IMR-90 (cell line): ENCODE measurements at regions of chr4 and their contacts with region 1.

Region 1: DNA sequence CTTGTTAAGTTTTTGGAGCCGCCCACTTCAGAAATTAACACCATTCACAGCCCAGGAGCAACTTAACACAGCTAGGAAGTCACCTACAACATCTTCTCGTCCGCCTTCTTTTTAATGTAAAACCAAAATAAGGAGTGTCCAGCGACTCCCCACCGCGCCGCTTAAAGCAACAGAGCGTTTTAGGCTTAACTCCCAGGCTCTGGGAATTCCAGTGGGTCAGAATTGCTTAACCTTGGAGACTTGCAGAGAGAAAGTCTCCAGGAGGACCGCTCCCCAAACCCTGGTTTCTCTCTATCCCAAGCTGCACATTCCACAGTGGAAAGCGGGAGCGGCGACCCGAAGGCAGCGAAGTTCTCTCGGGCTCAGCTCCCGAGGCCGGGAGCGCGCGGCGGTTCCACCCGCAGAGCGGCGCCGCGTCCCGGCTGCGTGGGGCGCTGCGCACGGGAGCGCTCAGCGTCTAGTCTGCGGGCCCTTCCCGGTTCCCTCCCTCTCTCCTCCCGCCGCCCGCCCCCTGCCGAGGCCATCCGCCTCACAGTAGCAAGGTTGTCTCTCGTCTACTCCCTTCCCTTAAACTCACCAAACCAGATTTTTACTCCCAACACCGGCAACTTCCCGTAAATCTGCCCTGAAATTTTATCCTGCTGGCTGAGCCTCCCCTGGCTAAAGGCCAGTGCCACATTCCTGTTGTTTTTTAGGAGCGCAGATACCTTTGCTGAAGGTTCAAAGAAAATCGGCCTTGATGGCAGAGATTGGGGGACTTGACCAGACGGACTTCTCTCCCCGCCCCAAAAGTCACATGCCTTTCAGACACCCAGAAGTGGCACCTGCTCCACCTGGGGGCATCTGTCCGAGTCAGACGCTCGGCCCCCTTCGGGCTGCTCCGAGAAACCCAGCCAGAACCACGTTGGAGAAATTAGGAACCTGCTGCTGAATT is at the start of gene RBM47:
- DNase-seq: peak; percentile 40
- ATAC-seq: peak; percentile 96
- H3K4me3 ChIP-seq: peak within 1 kb of the TSS; percentile 74
- H3K27ac ChIP-seq: peak within 1 kb of the TSS; percentile 6; the same call in 1 of the 2 replicates
- H3K4me1 ChIP-seq: peaks cover 5% of the 10 kb centered on the region
- H3K27me3 ChIP-seq: no peaks in the 10 kb centered on the region; the same call in none of the 2 replicates
- CTCF ChIP-seq: 0 out of 2 replicates have a peak, but pooled peaks have one; percentile 5
- POLR2A ChIP-seq: no peak
- RAD21 ChIP-seq: no peak; the same call in 1 of the 2 replicates
- total RNA-seq, gene RBM47: 0.83 and 1.1 TPM in 2 replicates

Region 2: DNA sequence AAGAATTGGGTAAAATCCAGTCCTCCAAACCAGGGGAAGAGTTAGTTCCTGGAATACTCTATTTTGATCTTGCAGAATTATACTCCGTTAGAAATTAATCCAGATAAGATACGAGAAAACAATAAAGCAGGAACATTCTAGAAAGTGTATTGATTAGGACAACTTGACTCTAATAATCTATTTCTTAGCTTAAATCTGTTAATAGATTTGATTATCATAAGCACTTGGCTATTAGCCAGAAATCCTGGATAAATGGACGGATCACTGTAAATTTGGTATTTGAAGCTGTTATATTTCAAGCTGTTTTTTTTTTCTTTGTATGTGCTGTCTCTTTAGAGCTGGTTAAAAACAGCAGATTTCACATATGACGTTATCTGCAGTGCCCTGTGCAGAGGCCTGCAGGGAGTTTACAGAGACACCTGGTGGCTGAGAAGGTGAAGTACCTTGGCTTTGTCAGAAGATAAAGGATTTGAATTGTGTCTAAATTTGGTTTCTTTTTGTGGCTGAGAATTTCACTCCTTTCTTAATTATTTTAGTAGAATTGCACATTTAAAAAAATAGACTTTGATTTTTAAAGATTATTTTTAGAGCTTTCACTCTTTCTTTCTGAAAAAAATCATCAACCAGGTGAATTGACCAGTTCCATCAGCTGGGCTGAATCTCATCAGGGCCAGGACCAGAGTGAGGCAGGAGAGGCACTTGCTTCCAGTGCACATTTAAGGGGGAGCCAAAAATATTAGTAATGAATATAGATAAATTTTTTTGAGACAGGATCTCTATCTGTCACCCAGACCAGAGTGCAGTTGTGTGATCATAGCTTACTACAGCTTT is 304.3 kb before region 1 on chr4:
- CTCF ChIA-PET with region 1: interaction called, 3 read pairs
- POLR2A ChIA-PET with region 1: no interaction called
- dilution Hi-C with region 1: no loop called
- in situ Hi-C with region 1: no loop called
- intact Hi-C with region 1: loop called (anchors 5 kb)
- DNase-seq: peak; percentile 72
- ATAC-seq: peak; percentile 77
- H3K4me3 ChIP-seq: no peak overlapping the region
- H3K27ac ChIP-seq: no peak overlapping the region
- H3K4me1 ChIP-seq: peaks cover 4% of the 10 kb centered on the region; the same call in 1 of the 2 replicates
- H3K27me3 ChIP-seq: peaks cover 4% of the 10 kb centered on the region; the same call in 1 of the 2 replicates
- CTCF ChIP-seq: peak; percentile 76
- POLR2A ChIP-seq: no peak
- RAD21 ChIP-seq: peak; percentile 77

Region 3: DNA sequence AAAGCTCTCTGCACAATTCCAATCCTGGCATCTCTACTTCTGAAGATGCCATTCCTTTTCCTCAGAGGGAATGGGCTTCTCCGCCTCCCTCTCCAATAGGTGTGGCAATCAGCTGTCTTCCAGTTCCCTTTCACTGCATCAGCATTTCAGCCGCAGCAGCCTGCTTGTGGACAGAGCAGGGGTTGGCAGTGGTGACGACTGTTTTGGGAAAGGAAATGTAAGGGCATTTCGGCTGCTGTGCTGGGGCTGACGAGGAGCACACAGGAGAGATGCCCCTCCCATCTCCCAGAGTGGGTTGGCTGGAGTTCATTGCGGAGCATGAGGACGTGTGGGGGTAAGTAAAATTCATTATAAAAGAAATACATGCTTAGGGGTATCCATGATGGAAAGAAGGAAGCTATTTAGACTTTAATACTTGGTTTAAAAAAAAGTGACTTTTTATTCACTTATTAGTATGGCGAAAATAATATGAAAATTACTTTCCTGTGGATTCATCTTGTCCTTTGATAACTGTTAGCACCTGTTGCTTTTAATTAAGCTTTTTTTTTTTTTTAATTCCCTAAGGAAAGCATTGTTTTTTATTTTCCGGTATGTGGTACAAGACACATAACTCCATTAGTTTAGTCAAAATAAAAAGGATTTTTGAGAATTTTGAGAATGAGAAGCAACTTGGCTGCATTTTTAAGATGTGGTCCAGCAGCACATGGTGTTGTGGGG is 908.5 kb after region 1 on chr4 and contains the start of gene LIMCH1:
- CTCF ChIA-PET with region 1: no interaction called
- POLR2A ChIA-PET with region 1: no interaction called
- dilution Hi-C with region 1: no loop called
- in situ Hi-C with region 1: no loop called
- intact Hi-C with region 1: no loop called
- DNase-seq: no peak
- ATAC-seq: no peak
- H3K4me3 ChIP-seq: no peak within 1 kb of the TSS
- H3K27ac ChIP-seq: no peak within 1 kb of the TSS
- H3K4me1 ChIP-seq: no peaks in the 10 kb centered on the region
- H3K27me3 ChIP-seq: no peaks in the 10 kb centered on the region; the same call in 1 of the 2 replicates
- CTCF ChIP-seq: no peak
- POLR2A ChIP-seq: no peak
- RAD21 ChIP-seq: no peak
- total RNA-seq, gene LIMCH1: 2.2 and 2.9 TPM in 2 replicates